ENCODE measurements at regions of chr4 and their contacts with region 1.

Region 1: GRCh38 chr4:87679449-87680169 is 29.5 kb downstream of the DMP1 start:
- DNase-seq: peak; percentile 25 to 47 (median 34)
- ATAC-seq: peak; percentile 38
- H3K4me3 ChIP-seq: no peak overlapping the region
- H3K27ac ChIP-seq: no peak overlapping the region
- H3K4me1 ChIP-seq: peaks cover 4% of the 10 kb centered on the region
- H3K27me3 ChIP-seq: no peaks in the 10 kb centered on the region
- CTCF ChIP-seq: peak; percentile 58 to 81 (median 66)
- POLR2A ChIP-seq: no peak

Region 2: GRCh38 chr4:87838890-87839591 is 159.4 kb after region 1 on chr4:
- intact Hi-C with region 1: loop called (anchors 10 kb)
- DNase-seq: peak in 3 of 4 donors; percentile 38 to 45 (median 40)
- ATAC-seq: peak; percentile 64
- H3K4me3 ChIP-seq: no peak overlapping the region
- H3K27ac ChIP-seq: no peak overlapping the region
- H3K4me1 ChIP-seq: peaks cover 5% of the 10 kb centered on the region
- H3K27me3 ChIP-seq: no peaks in the 10 kb centered on the region
- CTCF ChIP-seq: peak; percentile 36 to 70 (median 60)
- POLR2A ChIP-seq: no peak

Region 3: GRCh38 chr4:88204882-88205281 is 525.3 kb after region 1 on chr4:
- intact Hi-C with region 1: loop called (anchors 10 kb)
- DNase-seq: no peak
- ATAC-seq: no peak
- H3K4me3 ChIP-seq: no peak overlapping the region
- H3K27ac ChIP-seq: no peak overlapping the region
- H3K4me1 ChIP-seq: no peaks in the 10 kb centered on the region
- H3K27me3 ChIP-seq: no peaks in the 10 kb centered on the region
- CTCF ChIP-seq: no peak
- POLR2A ChIP-seq: no peak

Measured in body of pancreas (tissue), 4 donors.